Posterior cingulate gyrus (tissue), 11 donors: ENCODE measurements at regions of chr3 and their contacts with region 1.

Region 1: DNA sequence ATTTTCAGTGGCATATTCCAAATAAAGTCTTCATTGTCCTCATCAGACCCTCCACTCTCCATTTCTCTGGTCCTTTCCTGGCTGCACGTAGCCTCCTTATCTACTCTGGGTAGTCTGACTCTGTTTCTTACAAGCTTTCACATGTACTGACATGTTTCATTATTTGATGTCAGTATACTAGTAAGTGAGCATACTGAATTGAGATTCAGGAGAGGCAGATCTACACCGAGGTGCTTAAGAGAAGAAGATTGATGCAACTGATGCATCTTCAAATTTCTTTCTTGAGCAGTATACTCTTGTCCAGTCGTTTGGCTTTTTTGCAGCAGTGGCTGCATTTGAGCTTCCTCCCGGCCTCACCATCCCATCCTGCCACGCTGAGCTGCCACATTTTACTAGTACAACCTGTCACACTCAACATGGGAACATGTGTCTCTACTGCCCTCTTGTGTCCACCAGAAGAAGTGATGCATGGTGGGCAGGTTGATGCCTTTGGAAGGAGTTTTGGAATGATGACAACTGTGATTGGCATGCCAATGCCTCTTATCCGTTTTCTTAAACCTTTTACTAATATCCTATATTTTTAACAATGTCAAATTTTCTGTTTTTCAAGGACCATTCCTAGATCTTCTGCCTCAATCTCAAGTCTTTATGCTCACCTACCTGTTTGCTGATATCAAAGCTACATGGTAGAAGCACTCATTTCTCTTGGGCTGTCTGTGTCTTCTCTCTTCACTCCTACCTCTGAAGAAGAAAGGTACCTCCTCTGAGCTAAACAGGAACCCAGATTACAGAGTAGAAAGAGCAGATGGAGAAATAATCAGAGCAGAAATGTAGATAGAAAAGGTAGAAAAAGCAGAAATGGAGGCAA is 38.7 kb downstream of the GUCA1C start:
- DNase-seq: peak in 6 of 10 donors; percentile 20 to 89 (median 46)

Region 2: GRCh38 chr3:108489771-108490170 is 425.2 kb before region 1 on chr3:
- intact Hi-C with region 1: loop called (anchors 5 kb)
- DNase-seq: peak in 1 of 10 donors; percentile 33

Region 3: DNA sequence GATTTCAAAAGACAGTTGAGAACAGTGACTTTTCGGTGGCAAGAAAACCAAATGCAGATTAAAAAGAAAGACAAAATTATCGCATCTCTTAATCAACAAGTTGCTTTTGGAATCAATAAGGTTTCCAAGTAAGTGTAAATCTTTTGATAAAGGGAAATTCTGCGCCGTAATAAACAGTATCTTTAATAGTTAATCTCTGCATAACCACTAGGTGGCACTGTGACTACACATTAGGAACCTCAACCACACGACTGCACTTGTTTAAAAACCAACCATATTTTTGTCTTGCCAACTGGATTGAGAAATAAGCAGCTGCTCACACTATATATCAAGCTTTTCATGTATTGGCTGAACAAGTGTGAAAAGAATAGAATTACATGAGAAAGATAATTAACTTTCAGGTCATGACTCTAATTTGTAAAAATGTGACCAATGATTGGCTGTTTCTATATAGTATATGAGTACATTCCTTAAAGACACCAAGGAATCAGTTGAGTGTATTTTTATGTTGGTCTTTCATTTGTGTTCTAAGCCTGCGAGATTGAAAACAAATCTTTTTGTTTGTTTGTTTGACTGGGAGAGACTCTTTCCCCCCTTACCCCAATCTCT is 252.8 kb before region 1 on chr3:
- intact Hi-C with region 1: loop called (anchors 1 kb)
- DNase-seq: peak in 1 of 10 donors; percentile 10

Region 4: DNA sequence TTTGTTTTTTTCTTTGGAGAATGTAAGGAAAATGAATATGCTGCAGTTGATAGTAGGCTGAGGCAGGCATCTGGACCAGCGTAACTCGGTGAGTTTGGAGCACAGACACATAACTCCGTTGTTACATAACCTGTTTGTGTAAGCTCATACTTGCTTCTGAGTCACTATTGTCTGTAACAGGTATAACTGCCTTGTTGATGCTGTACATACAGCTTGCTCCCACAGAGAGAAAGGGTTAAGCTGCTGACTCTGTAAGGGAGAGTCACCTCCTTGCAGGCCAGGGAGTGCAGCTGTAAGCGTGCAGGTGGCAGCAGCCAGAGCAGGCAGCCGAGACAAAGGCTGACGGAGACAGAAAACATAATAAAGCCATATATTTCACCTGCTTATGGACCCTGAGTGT is 178.2 kb before region 1 on chr3:
- intact Hi-C with region 1: no loop called
- DNase-seq: peak in 1 of 10 donors; percentile 29

Region 5: DNA sequence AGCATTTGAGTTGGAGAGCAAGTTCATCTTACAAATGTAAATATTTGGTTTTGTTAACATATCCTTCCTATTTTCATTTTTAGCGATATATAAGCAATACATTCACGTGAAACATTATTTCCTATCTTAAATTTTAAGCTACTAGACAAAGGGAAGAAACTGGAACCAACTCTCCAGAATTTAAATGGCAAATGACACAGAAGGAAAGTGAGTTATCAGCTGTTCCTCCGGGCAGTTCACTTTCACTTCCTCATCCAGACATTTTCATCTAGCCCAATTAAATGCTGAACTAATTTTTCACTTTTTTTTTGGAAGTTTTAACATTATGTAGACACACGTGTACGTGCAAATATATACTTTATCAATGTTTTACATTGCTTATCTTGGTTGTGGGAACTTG is 144.3 kb after region 1 on chr3:
- intact Hi-C with region 1: no loop called
- DNase-seq: no peak